ENCODE measurements at regions of chr1 and their contacts with region 1.

Region 1: DNA sequence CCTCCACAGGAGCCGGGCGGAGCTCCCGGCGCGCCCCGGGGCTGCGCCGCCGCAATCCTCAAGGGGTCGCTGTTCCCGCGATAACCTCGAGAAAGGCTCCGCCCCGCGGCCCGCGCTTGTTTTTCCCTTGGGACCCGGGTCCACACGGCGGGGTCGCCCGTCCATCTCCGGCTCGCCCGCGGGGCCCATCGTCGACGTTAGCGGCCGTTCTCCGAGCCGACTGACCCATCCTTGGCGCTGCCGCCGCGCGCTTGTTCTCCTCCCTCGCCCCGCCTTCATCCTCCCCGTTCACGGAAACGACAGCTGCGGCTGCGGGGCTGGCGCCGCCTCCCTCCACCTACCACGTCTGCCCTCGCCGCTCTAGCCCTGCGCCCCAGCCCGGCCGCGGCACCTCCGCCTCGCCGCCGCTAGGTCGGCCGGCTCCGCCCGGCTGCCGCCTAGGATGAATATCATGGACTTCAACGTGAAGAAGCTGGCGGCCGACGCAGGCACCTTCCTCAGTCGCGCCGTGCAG is at the start of gene SH3GLB1:
- DNase-seq: peak; percentile 97
- ATAC-seq: peak; percentile 85
- H3K4me3 ChIP-seq: peak within 1 kb of the TSS; percentile 79 to 90 (median 82)
- H3K4me3 Mint-ChIP-seq: peak within 1 kb of the TSS; percentile 98
- H3K27ac ChIP-seq: peak within 1 kb of the TSS; percentile 78 to 93
- H3K27ac Mint-ChIP-seq: peak within 1 kb of the TSS; percentile 100
- H3K4me1 ChIP-seq: peaks cover 24 to 30% of the 10 kb centered on the region in 2 donors
- H3K4me1 Mint-ChIP-seq: peaks cover 44% of the 10 kb centered on the region
- H3K27me3 ChIP-seq: no peaks in the 10 kb centered on the region
- H3K27me3 Mint-ChIP-seq: no peaks in the 10 kb centered on the region
- CTCF ChIP-seq: peak; percentile 91
- total RNA-seq, gene SH3GLB1: 55.3 and 57.3 TPM in 2 replicates

Region 2: GRCh38 chr1:86616871-86617270 is 87.6 kb before region 1 on chr1:
- CTCF ChIA-PET with region 1: interaction called, 15 read pairs
- POLR2A ChIA-PET with region 1: interaction called, 5 read pairs
- intact Hi-C with region 1: loop called (anchors 1 kb)
- DNase-seq: peak; percentile 88
- ATAC-seq: peak; percentile 99
- H3K4me3 ChIP-seq: peak overlapping the region in 1 of 5 experiments; percentile 31
- H3K4me3 Mint-ChIP-seq: peak overlapping the region; percentile 27
- H3K27ac ChIP-seq: peak overlapping the region; percentile 65 to 77
- H3K27ac Mint-ChIP-seq: peak overlapping the region; percentile 70
- H3K4me1 ChIP-seq: peaks cover 22 to 23% of the 10 kb centered on the region in 2 donors
- H3K4me1 Mint-ChIP-seq: peaks cover 42% of the 10 kb centered on the region
- H3K27me3 ChIP-seq: no peaks in the 10 kb centered on the region
- H3K27me3 Mint-ChIP-seq: no peaks in the 10 kb centered on the region
- CTCF ChIP-seq: no peak

Region 3: DNA sequence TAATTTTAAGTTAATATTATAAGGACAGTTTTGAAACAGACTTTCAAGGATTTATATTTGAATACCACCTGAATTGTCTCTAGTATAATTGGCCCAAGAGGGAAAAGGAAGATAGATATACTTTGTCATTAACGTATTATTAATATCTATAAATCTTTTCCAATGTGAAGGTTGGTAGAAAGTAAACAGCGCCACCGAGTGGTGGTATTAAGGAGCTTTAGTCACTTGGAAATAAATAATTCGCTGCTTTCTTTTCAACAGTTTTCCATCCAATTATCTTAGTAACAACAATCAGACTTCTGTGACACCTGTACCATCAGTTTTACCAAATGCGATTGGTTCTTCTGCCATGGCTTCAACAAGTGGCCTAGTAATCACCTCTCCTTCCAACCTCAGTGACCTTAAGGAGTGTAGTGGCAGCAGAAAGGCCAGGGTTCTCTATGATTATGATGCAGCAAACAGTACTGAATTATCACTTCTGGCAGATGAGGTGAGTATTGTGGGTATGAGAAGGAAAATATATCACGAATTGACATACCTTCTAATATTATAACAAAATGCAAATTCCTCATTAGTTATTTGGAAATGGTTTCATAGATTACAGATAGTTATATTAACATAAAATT is 37.5 kb after region 1 on chr1:
- CTCF ChIA-PET with region 1: interaction called, 8 read pairs
- POLR2A ChIA-PET with region 1: no interaction called
- intact Hi-C with region 1: loop called (anchors 2 kb)
- DNase-seq: peak; percentile 50
- ATAC-seq: no peak
- H3K4me3 ChIP-seq: no peak overlapping the region
- H3K4me3 Mint-ChIP-seq: no peak overlapping the region
- H3K27ac ChIP-seq: no peak overlapping the region
- H3K27ac Mint-ChIP-seq: no peak overlapping the region
- H3K4me1 ChIP-seq: peaks cover 7 to 10% of the 10 kb centered on the region in 2 donors
- H3K4me1 Mint-ChIP-seq: no peaks in the 10 kb centered on the region
- H3K27me3 ChIP-seq: no peaks in the 10 kb centered on the region
- H3K27me3 Mint-ChIP-seq: no peaks in the 10 kb centered on the region
- CTCF ChIP-seq: peak; percentile 88

Region 4: DNA sequence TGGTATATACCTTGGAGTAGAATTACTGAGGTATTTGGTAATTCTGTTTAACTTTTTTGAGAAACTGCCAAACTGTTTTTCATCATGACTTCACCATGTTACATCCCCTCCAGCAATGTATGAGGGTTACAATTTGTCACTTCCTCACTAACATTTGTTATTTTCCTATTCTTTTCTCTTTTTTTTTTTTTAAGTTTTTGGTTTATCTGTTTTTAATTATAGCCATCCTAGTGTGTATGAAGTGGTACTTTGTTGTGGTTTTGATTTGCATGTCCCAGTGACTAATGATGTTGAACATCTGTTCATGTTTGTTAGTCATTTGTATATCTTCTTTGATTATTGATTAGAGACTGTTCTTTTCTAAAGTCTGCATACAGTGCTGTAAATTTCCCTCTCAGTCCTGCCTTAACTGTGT is 357.2 kb after region 1 on chr1:
- CTCF ChIA-PET with region 1: interaction called, 3 read pairs
- POLR2A ChIA-PET with region 1: no interaction called
- intact Hi-C with region 1: loop called (anchors 10 kb)
- DNase-seq: peak; percentile 57
- ATAC-seq: peak; percentile 35
- H3K4me3 ChIP-seq: no peak overlapping the region
- H3K4me3 Mint-ChIP-seq: peak overlapping the region; percentile 68
- H3K27ac ChIP-seq: peak overlapping the region; percentile 59 to 73
- H3K27ac Mint-ChIP-seq: peak overlapping the region; percentile 79
- H3K4me1 ChIP-seq: peaks cover 49 to 81% of the 10 kb centered on the region in 2 donors
- H3K4me1 Mint-ChIP-seq: peaks cover 80% of the 10 kb centered on the region
- H3K27me3 ChIP-seq: no peaks in the 10 kb centered on the region
- H3K27me3 Mint-ChIP-seq: no peaks in the 10 kb centered on the region
- CTCF ChIP-seq: no peak

Measured in B cell (primary cell).